Caco-2 (cell line): ENCODE measurements at regions of chr16 and their contacts with region 1.

Region 1: GRCh38 chr16:71894921-71895678 is at the start of gene IST1:
- DNase-seq: peak; percentile 99
- H3K4me3 ChIP-seq: peak within 1 kb of the TSS; percentile 79
- H3K4me3 Mint-ChIP-seq: peak within 1 kb of the TSS; percentile 79
- H3K27ac Mint-ChIP-seq: peak within 1 kb of the TSS; percentile 89
- H3K4me1 ChIP-seq: peaks cover 5% of the 10 kb centered on the region; the same call in 1 of the 2 replicates
- H3K4me1 Mint-ChIP-seq: no peaks in the 10 kb centered on the region
- H3K27me3 ChIP-seq: no peaks in the 10 kb centered on the region
- H3K27me3 Mint-ChIP-seq: no peaks in the 10 kb centered on the region
- CTCF ChIP-seq: no peak
- total RNA-seq, gene IST1: 310 and 331 TPM in 2 replicates

Region 2: GRCh38 chr16:71808593-71809459 is 86.3 kb before region 1 on chr16 and contains the start of gene AP1G1:
- CTCF ChIA-PET with region 1: no interaction called
- POLR2A ChIA-PET with region 1: interaction called, 4 read pairs
- intact Hi-C with region 1: loop called (anchors 1 kb)
- DNase-seq: peak; percentile 97 to 99
- H3K4me3 ChIP-seq: peak within 1 kb of the TSS; percentile 83
- H3K4me3 Mint-ChIP-seq: peak within 1 kb of the TSS; percentile 93
- H3K27ac Mint-ChIP-seq: peak within 1 kb of the TSS; percentile 97
- H3K4me1 ChIP-seq: 0 out of 2 replicates have a peak, but pooled peaks cover 16% of the 10 kb centered on the region
- H3K4me1 Mint-ChIP-seq: no peaks in the 10 kb centered on the region
- H3K27me3 ChIP-seq: no peaks in the 10 kb centered on the region
- H3K27me3 Mint-ChIP-seq: no peaks in the 10 kb centered on the region
- CTCF ChIP-seq: no peak
- total RNA-seq, gene AP1G1: 135 and 139 TPM in 2 replicates

Region 3: GRCh38 chr16:71826533-71827017 is 68.5 kb before region 1 on chr16:
- CTCF ChIA-PET with region 1: no interaction called
- POLR2A ChIA-PET with region 1: interaction called, 14 read pairs
- intact Hi-C with region 1: no loop called
- DNase-seq: no peak
- H3K4me3 ChIP-seq: no peak overlapping the region
- H3K4me3 Mint-ChIP-seq: no peak overlapping the region
- H3K27ac Mint-ChIP-seq: no peak overlapping the region
- H3K4me1 ChIP-seq: no peaks in the 10 kb centered on the region
- H3K4me1 Mint-ChIP-seq: peaks cover 7% of the 10 kb centered on the region
- H3K27me3 ChIP-seq: no peaks in the 10 kb centered on the region
- H3K27me3 Mint-ChIP-seq: no peaks in the 10 kb centered on the region
- CTCF ChIP-seq: no peak

Region 4: GRCh38 chr16:71961066-71962039 is 66.3 kb after region 1 on chr16:
- CTCF ChIA-PET with region 1: interaction called, 11 read pairs
- POLR2A ChIA-PET with region 1: no interaction called
- intact Hi-C with region 1: no loop called
- DNase-seq: peak; percentile 85 to 87
- H3K4me3 ChIP-seq: no peak overlapping the region
- H3K4me3 Mint-ChIP-seq: no peak overlapping the region
- H3K27ac Mint-ChIP-seq: no peak overlapping the region
- H3K4me1 ChIP-seq: no peaks in the 10 kb centered on the region
- H3K4me1 Mint-ChIP-seq: peaks cover 9% of the 10 kb centered on the region
- H3K27me3 ChIP-seq: no peaks in the 10 kb centered on the region
- H3K27me3 Mint-ChIP-seq: peaks cover 6% of the 10 kb centered on the region
- CTCF ChIP-seq: peak; percentile 92 to 94

Region 5: GRCh38 chr16:72093448-72094265 is 198.6 kb after region 1 on chr16 and contains the starts of genes DHX38 and TXNL4B:
- CTCF ChIA-PET with region 1: no interaction called
- POLR2A ChIA-PET with region 1: no interaction called
- intact Hi-C with region 1: loop called (anchors 2 kb)
- DNase-seq: peak; percentile 96 to 98
- H3K4me3 ChIP-seq: peak within 1 kb of the TSS; percentile 72
- H3K4me3 Mint-ChIP-seq: peak within 1 kb of the TSS; percentile 95
- H3K27ac Mint-ChIP-seq: peak within 1 kb of the TSS; percentile 97
- H3K4me1 ChIP-seq: 0 out of 2 replicates have a peak, but pooled peaks cover 9% of the 10 kb centered on the region
- H3K4me1 Mint-ChIP-seq: peaks cover 18% of the 10 kb centered on the region
- H3K27me3 ChIP-seq: no peaks in the 10 kb centered on the region
- H3K27me3 Mint-ChIP-seq: no peaks in the 10 kb centered on the region
- CTCF ChIP-seq: no peak
- total RNA-seq, gene DHX38: 89.1 and 92.1 TPM in 2 replicates
- total RNA-seq, gene TXNL4B: 17.9 and 18.4 TPM in 2 replicates